Caco-2 (cell line): ENCODE measurements at regions of chr20 and their contacts with region 1.

Region 1: DNA sequence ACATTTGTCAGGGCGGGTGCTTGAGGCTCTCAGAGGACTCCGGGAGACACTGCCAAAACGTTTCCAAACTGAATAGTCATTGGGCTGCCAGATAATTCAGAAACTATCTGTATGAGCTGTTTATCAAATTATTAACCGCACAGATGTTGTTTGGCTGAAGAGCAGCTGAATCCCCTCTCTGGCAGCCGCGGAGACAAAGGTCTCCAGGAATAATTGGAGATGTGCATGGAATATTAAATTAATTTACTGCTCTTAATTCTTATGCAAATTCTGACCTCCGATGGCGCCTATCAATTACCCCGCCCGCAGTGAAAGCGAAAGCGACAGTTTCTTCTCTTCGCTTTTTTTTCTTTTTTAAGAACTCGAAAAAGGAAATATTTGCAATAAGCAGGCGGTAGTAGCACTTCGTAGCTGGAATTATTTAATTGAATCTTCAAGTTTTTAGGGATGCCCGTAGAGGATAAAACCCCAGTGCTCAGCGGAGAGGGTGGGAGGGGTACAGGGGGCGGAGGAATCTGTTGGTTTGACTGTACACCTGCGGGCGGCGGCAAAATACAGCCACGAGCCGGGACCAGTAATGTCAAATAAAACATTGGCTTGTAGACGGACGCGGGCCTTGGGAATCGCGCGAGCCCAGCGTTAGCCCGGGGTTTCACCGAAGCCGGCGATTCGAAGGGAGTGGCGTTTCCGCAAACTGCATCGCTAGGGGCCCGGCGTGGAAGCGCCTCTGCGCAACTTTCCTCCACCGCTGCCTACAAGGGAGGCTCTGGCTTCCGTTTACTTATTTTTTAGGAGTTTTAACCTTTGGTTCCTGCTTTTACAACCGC is 6.2 kb downstream of the LINC00237 start:
- DNase-seq: peak; percentile 78 to 83
- H3K4me3 ChIP-seq: peak overlapping the region; percentile 56
- H3K4me3 Mint-ChIP-seq: peak overlapping the region; percentile 97
- H3K27ac Mint-ChIP-seq: peak overlapping the region; percentile 100
- H3K4me1 ChIP-seq: no peaks in the 10 kb centered on the region; the same call in 1 of the 2 replicates
- H3K4me1 Mint-ChIP-seq: peaks cover 6% of the 10 kb centered on the region
- H3K27me3 ChIP-seq: no peaks in the 10 kb centered on the region
- H3K27me3 Mint-ChIP-seq: peaks cover 4% of the 10 kb centered on the region
- CTCF ChIP-seq: no peak

Region 2: DNA sequence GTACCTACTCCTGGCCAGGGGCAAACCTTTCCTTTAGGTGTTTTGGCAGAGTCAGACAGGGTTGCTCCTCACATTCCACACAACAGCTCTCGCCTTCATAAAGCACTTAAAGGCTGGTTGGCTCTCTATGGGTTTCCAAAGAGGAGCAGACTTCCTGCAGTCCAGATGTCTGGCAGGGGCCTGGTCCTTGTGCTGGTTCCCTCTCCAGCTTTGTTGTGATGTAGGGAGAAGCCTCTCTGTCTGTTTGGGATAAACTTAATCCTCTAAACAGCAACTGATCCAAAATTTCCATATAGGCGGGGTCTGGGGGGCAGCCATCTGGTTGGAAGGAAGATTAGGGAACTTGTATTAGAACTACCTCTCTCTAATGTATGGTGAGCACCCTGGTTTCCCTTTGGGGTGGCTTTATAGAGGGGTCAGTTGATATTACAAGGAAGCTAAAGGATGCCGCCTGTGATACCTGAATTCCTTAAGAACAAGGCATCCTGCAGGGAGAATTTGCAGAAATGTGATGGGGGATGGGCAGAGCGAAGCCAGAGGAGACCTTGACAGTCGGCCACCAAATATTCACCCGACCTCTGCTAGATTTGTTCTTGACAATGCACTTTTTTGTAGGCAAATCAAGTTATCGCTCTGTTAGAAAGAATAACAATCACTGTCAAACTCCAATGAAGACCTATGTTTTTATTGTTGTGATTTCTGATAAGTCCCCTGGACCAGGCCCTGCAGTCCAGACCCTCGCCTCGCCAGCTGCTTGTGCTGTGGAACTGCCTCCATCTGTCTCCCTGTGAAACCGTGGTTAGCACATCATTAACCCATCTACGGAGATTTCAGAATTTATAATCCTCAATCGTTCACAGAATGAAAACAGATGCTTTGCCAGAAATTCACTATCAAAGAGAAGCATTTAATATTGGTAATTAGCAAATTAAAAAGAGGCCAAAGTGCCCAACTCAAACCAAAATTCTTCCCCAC is 293.6 kb before region 1 on chr20:
- CTCF ChIA-PET with region 1: no interaction called
- POLR2A ChIA-PET with region 1: no interaction called
- intact Hi-C with region 1: no loop called
- DNase-seq: no peak
- H3K4me3 ChIP-seq: no peak overlapping the region
- H3K4me3 Mint-ChIP-seq: no peak overlapping the region
- H3K27ac Mint-ChIP-seq: no peak overlapping the region
- H3K4me1 ChIP-seq: no peaks in the 10 kb centered on the region
- H3K4me1 Mint-ChIP-seq: no peaks in the 10 kb centered on the region
- H3K27me3 ChIP-seq: no peaks in the 10 kb centered on the region
- H3K27me3 Mint-ChIP-seq: peaks cover 6% of the 10 kb centered on the region
- CTCF ChIP-seq: no peak

Region 3: DNA sequence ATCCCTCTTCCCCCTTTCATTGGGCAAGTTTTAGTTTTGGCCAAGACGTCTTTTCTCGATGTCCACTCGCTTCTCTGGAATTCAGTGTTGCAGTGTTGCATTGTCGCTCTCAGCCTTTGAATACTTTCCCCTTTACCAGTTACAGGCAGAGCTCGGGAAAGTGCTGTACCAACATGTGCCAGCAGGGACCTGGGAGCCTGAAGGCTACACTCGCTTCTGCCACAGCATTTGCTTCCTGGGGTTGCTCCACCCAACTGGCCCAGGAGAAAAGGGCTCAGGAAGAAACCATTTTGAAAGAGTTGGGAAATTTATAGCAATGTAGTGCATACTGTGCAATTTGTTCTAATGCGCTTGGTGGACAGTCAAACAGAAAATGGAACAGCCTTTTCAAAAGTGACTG is 72.4 kb before region 1 on chr20:
- CTCF ChIA-PET with region 1: no interaction called
- POLR2A ChIA-PET with region 1: no interaction called
- intact Hi-C with region 1: loop called (anchors 2 kb)
- DNase-seq: peak; percentile 53 to 54
- H3K4me3 ChIP-seq: no peak overlapping the region
- H3K4me3 Mint-ChIP-seq: no peak overlapping the region
- H3K27ac Mint-ChIP-seq: no peak overlapping the region
- H3K4me1 ChIP-seq: no peaks in the 10 kb centered on the region
- H3K4me1 Mint-ChIP-seq: peaks cover 15% of the 10 kb centered on the region
- H3K27me3 ChIP-seq: no peaks in the 10 kb centered on the region
- H3K27me3 Mint-ChIP-seq: no peaks in the 10 kb centered on the region
- CTCF ChIP-seq: peak; percentile 27 to 33

Region 4: DNA sequence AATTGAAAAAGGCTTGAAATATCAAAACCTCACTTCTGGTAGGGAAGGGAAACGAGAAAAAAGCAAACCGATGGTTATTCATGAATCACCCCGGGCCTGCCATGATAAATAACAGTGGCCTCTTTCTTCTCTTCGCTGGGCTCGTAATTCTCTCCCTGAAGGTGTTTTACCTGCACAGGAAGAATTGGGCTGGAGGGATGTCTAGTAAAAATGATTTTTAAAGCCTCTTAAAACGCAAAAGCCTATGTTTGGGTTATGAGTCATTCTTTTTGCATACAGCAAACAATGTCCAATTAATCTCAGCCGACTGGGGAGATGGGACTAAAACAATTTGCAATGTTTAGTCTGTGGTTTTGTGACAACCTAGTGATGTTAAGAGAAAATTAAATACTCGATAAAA is 10.6 kb before region 1 on chr20:
- CTCF ChIA-PET with region 1: no interaction called
- POLR2A ChIA-PET with region 1: no interaction called
- intact Hi-C with region 1: no loop called
- DNase-seq: no peak
- H3K4me3 ChIP-seq: no peak overlapping the region
- H3K4me3 Mint-ChIP-seq: no peak overlapping the region
- H3K27ac Mint-ChIP-seq: no peak overlapping the region
- H3K4me1 ChIP-seq: no peaks in the 10 kb centered on the region
- H3K4me1 Mint-ChIP-seq: no peaks in the 10 kb centered on the region
- H3K27me3 ChIP-seq: no peaks in the 10 kb centered on the region
- H3K27me3 Mint-ChIP-seq: no peaks in the 10 kb centered on the region
- CTCF ChIP-seq: no peak

Region 5: DNA sequence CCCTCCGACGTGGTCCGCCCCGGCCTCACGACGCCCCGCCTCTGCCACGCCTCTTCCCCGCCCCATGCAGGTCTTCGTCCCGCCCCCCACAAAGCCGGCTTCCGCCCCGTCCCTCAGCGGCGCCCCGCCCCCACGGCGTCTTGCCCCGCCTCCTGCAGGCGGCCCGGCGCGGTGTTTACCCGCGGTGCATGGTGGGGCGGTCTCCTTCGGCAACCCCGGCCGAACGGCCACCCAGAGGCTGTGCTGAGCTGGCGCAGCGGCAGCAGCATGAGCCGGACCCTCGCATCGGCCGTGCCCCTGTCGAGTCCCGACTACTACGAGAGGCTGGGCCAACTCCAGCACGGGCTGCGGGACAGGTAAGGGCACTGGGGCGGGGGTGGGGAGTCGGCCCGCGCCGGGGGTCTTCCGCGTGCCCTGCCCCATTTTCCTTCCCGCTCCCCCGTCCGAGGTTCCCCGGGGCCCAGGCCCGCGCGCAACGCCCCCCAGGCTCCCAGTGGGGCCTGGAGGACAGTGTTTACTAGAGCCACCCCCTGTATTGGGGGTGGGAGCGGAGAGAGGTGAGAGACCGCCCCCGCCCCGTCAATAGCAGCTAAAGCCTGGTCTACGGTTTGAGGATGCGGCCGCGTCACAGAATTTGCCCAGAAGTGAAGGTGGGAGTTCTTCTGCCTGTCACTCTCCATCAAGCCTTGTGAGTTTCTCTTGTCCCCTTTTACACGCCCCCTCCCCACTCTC is 26.1 kb after region 1 on chr20 and contains the start of gene KIZ:
- CTCF ChIA-PET with region 1: interaction called, 18 read pairs
- POLR2A ChIA-PET with region 1: interaction called, 16 read pairs
- intact Hi-C with region 1: loop called (anchors 1 kb)
- DNase-seq: peak; percentile 97 to 100
- H3K4me3 ChIP-seq: peak within 1 kb of the TSS; percentile 97
- H3K4me3 Mint-ChIP-seq: peak within 1 kb of the TSS; percentile 84
- H3K27ac Mint-ChIP-seq: peak within 1 kb of the TSS; percentile 61
- H3K4me1 ChIP-seq: no peaks in the 10 kb centered on the region
- H3K4me1 Mint-ChIP-seq: peaks cover 9% of the 10 kb centered on the region
- H3K27me3 ChIP-seq: no peaks in the 10 kb centered on the region
- H3K27me3 Mint-ChIP-seq: no peaks in the 10 kb centered on the region
- CTCF ChIP-seq: peak; percentile 10 to 38
- total RNA-seq, gene KIZ: 21.0 and 31.8 TPM in 2 replicates